ENCODE measurements at regions of chr2 and their contacts with region 1.

Region 1: DNA sequence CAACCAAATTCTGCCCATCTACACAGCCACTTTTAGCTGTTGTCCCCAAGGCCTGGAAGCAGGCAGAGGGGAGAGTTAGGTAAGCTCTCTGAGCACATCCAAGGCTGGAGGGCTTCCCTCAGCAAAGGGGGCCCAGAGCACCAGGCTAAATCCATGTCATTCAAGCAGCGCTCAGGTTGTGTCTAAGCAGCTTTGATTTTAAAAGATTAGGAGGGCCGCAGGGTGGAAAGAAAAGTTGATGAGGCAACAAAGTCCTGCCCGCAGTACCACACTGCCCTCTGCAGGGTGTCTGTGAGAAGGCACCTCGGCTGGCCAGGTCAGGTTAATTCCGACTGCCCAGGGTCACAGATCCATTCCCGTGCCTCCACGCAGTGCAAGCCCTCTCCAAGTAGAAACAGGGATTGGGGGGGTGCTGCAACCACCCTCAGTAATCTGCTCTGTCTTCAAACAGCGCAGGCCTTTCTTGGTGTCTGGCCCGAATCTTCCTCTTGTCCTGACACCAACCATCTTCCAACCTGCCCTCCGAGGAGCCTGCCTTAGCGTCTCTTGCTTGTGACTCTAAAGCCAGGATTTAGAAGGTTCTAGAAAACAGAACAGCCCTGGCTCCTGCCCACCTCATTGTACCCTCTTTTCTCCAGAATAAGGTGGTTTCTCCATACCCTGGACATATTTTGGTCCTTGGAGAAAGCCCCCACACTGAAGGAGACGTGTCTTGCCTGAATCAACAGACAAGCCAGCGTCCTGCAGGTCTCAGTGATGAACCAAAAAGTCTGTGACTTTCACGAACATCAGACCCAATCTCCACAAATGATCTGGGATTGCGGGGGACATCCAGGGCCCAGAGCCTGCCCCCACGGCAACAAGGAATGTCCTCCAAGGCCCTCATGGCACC is 289.2 kb downstream of the TNS1 start:
- DNase-seq: peak; percentile 76 to 88 (median 82)
- ATAC-seq: peak; percentile 42 to 82 (median 77)
- H3K4me3 ChIP-seq: no peak overlapping the region
- H3K27ac ChIP-seq: peak overlapping the region in 11 of 12 donors; percentile 35 to 74 (median 58)
- H3K4me1 ChIP-seq: peaks cover 0 to 28% (median 17%) of the 10 kb centered on the region in 12 donors
- H3K27me3 ChIP-seq: no peaks in the 10 kb centered on the region
- CTCF ChIP-seq: peak; percentile 90 to 99 (median 97)
- POLR2A ChIP-seq: no peak

Region 2: DNA sequence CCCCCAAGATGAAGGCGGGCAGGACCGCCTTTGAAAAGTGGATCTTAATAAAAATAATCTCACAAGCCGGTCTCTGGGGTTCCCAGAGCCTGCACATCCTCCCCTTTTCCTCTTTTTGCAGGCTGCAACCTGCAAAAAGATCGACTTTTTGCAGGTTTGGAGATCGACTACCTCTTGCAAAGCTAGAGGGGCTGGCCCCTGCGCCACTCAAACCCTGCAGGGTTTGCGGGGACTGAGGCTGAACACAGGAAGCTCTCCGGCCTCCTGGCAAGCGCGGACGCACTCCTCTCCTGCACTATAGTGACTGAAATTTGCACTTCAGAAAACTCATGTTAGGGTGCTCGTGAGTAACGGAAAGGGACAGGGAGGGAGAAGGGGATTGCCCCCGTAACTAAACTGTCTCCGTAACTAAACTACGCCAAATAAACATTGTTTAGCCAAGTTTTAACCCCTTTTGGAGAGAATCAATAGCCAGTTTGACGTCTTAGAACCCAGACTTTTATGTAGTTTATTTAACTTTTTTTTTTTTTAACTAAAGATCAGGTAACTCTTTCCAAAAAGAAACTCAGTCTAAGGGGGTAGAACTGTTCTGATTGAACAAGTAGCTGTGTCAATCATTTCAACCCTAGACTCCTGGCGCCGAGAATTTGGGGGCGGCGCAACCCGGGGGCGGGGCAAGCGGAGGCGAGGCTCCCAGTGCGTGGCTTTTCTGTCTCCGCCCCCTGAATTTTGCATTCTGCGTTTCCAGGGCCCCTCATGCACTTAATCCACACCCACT is 1020.8 kb before region 1 on chr2:
- intact Hi-C with region 1: loop called in 7 of 10 experiments (anchors 5 kb)
- DNase-seq: peak; percentile 85 to 92 (median 90)
- ATAC-seq: peak; percentile 47 to 68 (median 55)
- H3K4me3 ChIP-seq: peak overlapping the region; percentile 53 to 80 (median 63)
- H3K27ac ChIP-seq: peak overlapping the region; percentile 58 to 93 (median 88)
- H3K4me1 ChIP-seq: peaks cover 0 to 69% (median 37%) of the 10 kb centered on the region in 12 donors
- H3K27me3 ChIP-seq: peaks cover 0 to 61% (median 0%) of the 10 kb centered on the region in 9 donors
- CTCF ChIP-seq: no peak
- POLR2A ChIP-seq: no peak

Region 3: DNA sequence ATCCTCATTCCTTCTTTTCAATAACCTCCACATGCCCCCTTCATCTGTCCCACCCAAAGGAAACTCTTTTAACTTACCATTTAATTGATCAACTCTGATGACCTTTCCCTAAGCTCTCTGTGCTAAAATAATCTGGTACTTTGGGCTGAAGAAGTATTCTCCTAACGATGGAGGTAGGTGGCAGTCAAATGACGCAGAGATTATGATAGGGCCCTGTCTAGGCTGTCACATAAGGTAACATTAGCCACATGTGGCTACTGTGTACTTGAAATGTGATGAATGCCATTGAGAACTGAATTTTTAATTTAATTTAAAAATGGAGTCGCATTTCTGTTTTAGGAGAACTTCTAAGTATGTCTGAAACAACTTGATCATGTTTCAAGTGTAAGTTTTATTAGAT is 713.2 kb before region 1 on chr2:
- intact Hi-C with region 1: loop called in 3 of 10 experiments (anchors 10 kb)
- DNase-seq: no peak
- ATAC-seq: peak in 2 of 4 donors; percentile 54 to 64
- H3K4me3 ChIP-seq: no peak overlapping the region
- H3K27ac ChIP-seq: no peak overlapping the region
- H3K4me1 ChIP-seq: peaks cover 0 to 11% (median 4%) of the 10 kb centered on the region in 12 donors
- H3K27me3 ChIP-seq: peaks cover 0 to 2% (median 0%) of the 10 kb centered on the region in 9 donors
- CTCF ChIP-seq: peak in 3 of 12 donors; percentile 8 to 21 (median 20)
- POLR2A ChIP-seq: no peak

Region 4: DNA sequence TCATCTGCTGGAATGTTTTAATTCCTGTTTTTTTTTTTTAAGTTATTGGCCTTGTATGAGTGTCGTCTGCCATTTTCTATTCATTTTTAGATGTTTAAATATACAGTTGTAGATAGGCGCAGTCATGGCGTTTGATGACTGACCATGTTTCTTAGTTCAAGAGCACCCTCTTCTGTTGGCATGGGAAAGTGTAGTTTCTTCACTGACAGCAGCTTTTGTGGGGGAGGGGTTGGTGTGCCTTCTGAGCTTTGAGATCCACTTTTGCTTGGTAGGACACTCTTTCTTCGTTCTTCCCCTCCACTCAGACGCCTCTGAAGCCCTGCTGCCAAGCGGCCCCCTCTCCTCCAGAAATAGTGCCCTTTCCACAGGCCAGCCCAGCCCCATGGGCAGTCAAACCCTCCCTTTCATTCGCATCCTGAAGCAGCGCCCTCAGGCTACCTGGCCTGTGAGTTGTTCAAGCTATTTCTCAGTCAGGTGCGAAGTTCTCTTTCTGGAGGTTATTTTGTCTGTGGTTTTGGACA is 202.8 kb before region 1 on chr2:
- intact Hi-C with region 1: loop called in 8 of 10 experiments (anchors 2 to 10 kb)
- DNase-seq: peak in 4 of 5 donors; percentile 39 to 77 (median 62)
- ATAC-seq: peak; percentile 88 to 93 (median 91)
- H3K4me3 ChIP-seq: no peak overlapping the region
- H3K27ac ChIP-seq: peak overlapping the region in 2 of 12 donors; percentile 2 to 16
- H3K4me1 ChIP-seq: peaks cover 0 to 24% (median 5%) of the 10 kb centered on the region in 12 donors
- H3K27me3 ChIP-seq: no peaks in the 10 kb centered on the region
- CTCF ChIP-seq: peak; percentile 30 to 82 (median 72)
- POLR2A ChIP-seq: no peak

Region 5: GRCh38 chr2:217657252-217657651 is 56.4 kb before region 1 on chr2:
- intact Hi-C with region 1: loop called in 4 of 10 experiments (anchors 5 kb)
- DNase-seq: no peak
- ATAC-seq: no peak
- H3K4me3 ChIP-seq: no peak overlapping the region
- H3K27ac ChIP-seq: no peak overlapping the region
- H3K4me1 ChIP-seq: peaks cover 0 to 22% (median 0%) of the 10 kb centered on the region in 12 donors
- H3K27me3 ChIP-seq: no peaks in the 10 kb centered on the region
- CTCF ChIP-seq: no peak
- POLR2A ChIP-seq: no peak

Measured in heart left ventricle (tissue), 16 donors.